Posterior vena cava (tissue), 2 donors: ENCODE measurements at regions of chr9 and their contacts with region 1.

Region 1: DNA sequence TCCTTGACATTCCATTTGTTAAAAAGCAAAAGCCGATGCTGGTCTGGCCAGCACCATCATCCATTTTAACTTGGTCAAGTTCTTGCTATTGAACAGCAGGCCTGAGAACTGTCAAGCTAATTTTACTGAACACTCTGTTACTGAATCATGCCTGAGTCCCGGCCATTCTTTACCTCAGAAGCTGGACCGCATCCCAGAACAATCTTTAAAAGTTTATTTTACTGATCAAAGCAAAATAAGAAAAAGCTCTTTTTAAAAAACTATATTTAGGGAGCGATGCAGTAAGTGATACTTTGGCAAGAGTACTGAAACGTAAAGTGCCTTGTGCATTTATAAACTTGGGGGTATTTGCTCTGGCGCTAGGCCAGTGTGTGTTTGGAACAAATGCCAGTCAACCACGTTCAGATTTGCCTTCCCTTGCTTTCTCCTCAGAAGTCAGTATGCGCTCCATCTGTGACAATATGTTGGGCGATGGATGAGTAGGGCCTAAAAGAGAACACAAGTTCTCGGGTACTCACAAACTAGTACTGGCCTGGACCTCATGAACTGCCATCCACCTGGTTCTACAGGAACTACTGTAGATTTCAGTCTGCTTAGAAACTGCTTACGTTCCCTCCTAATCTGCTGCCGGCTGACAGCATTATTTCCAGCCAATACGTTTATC is 161.9 kb downstream of the MAPKAP1 start:
- DNase-seq: no peak

Region 2: GRCh38 chr9:125280945-125281344 is 264.2 kb before region 1 on chr9:
- intact Hi-C with region 1: no loop called
- DNase-seq: no peak

Region 3: DNA sequence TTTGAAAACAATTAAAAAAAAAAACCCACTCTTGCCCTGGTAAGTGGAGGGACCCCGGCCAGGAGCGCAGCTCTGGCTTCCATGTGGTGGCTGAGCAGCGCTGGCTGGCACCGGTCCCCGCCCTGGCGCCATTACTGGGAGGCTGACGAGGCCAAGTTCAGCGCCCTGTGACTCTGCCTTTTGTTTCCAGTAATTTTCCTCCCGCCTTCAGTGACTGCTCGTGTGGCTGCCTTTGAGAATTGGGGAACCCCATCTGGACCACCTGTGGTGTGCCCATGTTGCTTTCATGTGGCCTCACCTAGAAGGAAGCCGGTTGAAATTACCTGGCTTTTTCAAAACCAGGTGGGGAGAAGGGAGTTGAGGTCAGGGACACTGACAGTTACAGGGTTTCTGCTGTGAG is 147.4 kb before region 1 on chr9:
- intact Hi-C with region 1: no loop called
- DNase-seq: no peak

Region 4: GRCh38 chr9:125472926-125473701 is 72.0 kb before region 1 on chr9:
- intact Hi-C with region 1: loop called in 1 of 2 experiments (anchors 10 kb)
- DNase-seq: no peak